ENCODE measurements at regions of chr1 and their contacts with region 1.

Region 1: DNA sequence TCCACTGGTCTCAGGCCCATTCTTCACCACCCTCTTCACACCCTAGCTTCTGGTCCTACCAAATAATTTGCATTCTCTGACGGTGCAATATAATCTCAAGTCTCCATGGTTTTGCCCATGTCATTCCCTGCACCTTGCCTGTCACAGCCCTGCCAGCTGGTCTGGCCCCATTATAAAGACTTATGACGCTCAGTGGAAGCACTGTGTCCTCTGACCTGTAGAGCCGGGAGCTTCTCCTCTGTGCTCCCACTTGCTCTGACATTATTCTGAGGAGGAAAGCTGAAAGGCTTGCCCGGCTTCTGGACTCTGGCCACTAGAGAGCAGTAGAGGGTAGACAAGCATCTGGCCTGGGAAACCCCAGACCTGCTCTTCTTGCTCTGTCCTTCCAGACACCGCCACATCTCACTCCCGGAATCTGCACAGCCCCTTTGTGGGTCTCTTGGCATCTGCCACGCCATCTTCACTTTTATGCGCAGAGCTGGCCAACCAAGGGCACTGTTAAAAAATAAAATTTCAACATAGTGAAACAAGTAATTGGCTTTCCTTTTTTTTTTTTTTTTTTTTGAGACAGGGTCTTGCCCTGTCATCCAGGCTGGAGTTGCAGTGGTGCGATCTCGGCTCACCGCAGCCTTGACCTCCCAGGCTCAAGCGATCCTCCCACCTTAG is 44.4 kb downstream of the NENF start:
- DNase-seq: peak; percentile 87
- CTCF ChIP-seq: peak; percentile 90

Region 2: DNA sequence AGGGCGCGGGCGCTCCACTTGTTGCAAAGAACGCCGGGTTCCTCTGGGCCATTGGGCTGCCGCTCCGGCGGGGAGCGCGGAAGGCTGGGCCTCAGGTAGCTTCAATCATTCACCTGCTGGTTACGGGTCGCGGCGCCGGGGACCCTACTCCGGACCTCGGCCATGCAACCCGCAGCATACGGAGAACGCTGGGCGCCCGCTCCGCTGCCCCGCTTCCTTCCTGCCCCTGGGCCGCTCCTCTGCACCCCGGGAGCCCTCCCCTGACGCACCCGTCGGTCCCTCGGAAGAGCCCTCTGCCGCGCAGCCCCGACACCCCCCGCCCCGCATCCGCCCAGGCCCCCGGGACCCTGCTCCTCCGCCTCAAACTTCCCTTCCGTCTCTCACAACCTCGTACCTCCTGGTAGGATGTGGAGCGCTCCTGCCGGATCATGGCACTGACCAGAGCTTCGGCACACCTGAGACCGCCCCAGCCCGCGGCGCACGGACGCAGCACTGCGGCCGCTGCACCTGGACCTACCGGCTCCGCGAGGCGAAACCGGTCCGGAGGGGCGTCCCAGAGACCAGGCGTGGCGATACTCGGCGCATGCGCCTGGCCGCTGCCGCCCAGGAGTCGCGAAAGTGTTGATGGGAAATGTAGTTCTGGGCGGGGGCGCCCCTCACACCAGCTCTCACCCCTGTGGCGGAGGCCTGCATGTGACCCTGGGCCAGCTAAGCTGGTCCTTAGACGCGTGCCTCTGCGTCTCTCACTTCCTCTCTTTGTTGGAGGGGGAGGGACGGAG is 62.6 kb before region 1 on chr1 and contains the start of gene PACC1:
- CTCF ChIA-PET with region 1: no interaction called
- POLR2A ChIA-PET with region 1: no interaction called
- DNase-seq: peak; percentile 98
- CTCF ChIP-seq: no peak

Region 3: GRCh38 chr1:212488397-212489283 is 11.5 kb after region 1 on chr1:
- CTCF ChIA-PET with region 1: interaction called, 45 read pairs
- POLR2A ChIA-PET with region 1: interaction called, 4 read pairs
- DNase-seq: peak; percentile 79
- CTCF ChIP-seq: no peak

Region 4: GRCh38 chr1:212503714-212504113 is 26.6 kb after region 1 on chr1:
- CTCF ChIA-PET with region 1: interaction called, 12 read pairs
- POLR2A ChIA-PET with region 1: no interaction called
- DNase-seq: no peak
- CTCF ChIP-seq: no peak

Region 5: DNA sequence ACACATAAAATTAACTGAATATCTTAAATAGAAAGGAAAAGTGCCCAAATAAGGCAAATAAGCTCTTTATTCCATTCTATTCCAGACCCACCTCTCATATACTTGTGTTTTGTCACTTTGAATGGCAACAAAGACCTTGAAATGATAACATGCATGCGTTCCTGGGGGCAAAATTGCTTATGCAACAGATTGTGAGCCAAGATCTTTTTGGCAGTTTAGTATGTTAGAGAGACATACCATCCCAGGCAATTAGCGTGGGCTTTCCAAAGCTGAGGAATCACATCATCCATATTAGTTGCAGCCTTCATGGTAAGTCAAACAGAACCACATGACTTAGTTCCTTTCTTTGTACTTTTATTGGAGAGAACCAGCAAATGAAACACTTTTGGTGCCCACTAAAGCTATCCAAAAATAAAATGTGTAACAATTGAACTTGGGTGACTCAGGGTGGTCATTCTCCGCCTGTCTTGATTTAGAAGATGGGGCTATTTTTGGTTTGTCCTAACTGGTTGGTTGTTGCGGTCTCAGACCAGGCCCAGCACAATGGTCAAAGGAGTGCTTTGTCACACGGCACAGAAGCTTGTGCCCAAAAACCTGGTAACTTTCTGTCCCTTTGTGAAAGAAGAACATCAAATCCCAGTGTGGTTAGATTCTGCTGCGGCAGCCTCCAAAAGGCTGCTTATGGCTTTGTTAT is 62.7 kb after region 1 on chr1:
- CTCF ChIA-PET with region 1: interaction called, 16 read pairs
- POLR2A ChIA-PET with region 1: interaction called, 7 read pairs
- DNase-seq: no peak
- CTCF ChIP-seq: no peak

Region 6: GRCh38 chr1:212566522-212567479 is 89.7 kb after region 1 on chr1:
- CTCF ChIA-PET with region 1: interaction called, 13 read pairs
- POLR2A ChIA-PET with region 1: interaction called, 4 read pairs
- DNase-seq: peak; percentile 88
- CTCF ChIP-seq: no peak

Region 7: GRCh38 chr1:212683357-212683722 is 206.2 kb after region 1 on chr1:
- CTCF ChIA-PET with region 1: interaction called, 11 read pairs
- POLR2A ChIA-PET with region 1: no interaction called
- DNase-seq: peak; percentile 82
- CTCF ChIP-seq: no peak

Region 8: DNA sequence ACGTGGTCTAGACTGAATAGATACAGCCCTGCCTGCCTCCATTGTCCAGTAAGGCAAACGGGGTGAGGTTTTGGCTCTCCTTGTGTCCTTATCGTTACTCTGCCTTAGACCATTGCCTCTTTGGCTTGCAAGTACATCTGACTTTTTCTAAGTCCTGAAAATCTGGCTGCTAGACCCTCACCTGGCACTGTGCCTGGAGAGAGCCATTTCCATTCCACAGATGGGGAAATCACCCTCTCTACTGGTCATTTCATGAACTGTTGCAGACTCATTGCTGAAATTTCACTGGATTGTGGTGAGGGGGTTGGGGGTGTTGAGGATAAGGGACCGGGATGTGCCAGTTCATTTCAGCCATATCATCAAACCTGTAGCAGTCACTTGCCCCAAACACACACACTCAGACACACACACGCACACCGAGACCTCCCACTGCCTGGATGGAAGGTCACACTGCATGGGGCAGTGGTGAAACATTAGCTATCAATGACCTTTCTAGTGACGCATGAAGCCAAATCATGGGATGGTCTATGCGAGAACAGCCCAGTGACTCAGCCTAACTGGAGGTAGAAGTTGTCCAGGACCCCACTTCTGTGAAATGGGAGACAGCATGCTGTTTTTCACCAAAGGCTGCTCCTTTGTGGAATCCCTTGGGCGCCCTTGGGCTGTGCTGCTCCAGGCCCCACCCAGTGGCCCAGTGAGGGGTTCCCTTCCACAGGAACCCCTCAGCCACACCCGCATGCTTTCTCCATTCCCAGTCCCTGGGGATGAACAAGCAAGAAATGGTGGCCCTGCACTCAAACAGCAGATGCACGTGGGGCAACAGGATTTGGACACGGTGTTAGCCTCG is 438.3 kb after region 1 on chr1:
- CTCF ChIA-PET with region 1: no interaction called
- POLR2A ChIA-PET with region 1: no interaction called
- DNase-seq: no peak
- CTCF ChIP-seq: peak; percentile 21